IMR-90 (cell line): ENCODE measurements at regions of chr2 and their contacts with region 1.

Region 1: DNA sequence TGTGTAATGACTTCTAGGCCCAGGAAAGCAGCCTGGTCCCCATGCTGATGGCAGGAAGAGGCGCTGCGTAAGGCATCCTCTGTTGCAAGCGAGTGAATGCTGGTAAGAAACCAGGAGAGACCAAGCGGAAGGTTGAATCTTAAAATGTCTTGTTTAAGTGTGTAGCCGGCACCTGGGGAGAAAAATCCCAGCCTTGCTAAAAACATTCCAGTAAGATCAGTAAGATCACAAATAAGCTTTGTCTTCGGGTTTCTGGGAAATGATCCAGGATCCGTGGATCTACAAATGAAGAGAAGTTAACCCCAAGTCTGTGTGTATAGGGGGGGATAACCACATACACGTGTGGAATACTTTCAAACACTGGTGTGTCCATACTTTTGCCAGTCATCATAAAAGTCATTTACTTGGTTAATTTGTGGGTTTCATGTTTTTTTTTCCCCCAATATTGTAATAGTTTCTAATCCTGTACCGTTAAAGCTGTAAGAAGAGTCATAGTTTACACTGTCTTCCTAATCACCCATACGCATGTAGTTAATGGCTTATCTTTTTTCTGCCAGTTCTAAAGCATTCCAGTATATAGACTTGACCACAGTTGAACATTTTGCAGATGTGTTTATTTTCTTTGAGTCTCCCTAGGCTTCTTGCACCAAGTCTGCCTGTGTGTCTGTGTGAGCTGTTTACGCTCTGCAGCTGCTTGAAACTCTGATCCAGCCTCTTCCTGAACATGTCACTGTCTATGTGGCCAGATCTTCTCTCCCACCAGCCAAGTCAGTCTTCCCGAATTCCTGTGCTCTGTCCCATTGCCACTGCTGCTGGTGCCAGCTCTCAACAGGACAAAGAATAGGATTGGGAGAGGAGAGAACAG is 135.9 kb upstream of the ARL4C start:
- DNase-seq: peak; percentile 100
- ATAC-seq: peak; percentile 91
- H3K4me3 ChIP-seq: no peak overlapping the region
- H3K27ac ChIP-seq: peak overlapping the region; percentile 97
- H3K4me1 ChIP-seq: peaks cover 33% of the 10 kb centered on the region
- H3K27me3 ChIP-seq: no peaks in the 10 kb centered on the region
- CTCF ChIP-seq: no peak
- POLR2A ChIP-seq: peak; percentile 48; the same call in 1 of the 2 replicates
- RAD21 ChIP-seq: no peak; the same call in 1 of the 2 replicates

Region 2: DNA sequence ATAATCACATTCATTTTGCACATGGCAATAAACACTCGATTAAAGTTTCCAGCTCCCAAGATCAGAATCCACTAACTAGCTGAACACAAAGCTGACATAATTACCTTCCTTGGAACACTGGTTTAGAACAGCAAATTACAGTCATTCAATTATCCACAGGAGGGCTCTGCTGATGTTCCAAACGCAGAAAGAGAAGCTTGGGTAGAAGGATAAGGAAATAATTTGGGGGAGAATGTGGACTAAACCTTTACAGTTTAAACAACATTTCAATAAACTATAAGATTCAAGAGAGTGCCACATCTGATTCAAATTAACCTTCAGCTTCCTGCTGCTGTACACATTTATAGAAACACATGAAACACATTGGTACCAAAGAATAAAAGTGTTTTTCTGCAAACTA is 68.1 kb before region 1 on chr2:
- CTCF ChIA-PET with region 1: interaction called, 7 read pairs
- POLR2A ChIA-PET with region 1: no interaction called
- dilution Hi-C with region 1: no loop called
- in situ Hi-C with region 1: loop called (anchors 5 kb)
- intact Hi-C with region 1: loop called (anchors 2 kb)
- DNase-seq: peak; percentile 80
- ATAC-seq: peak; percentile 87
- H3K4me3 ChIP-seq: no peak overlapping the region
- H3K27ac ChIP-seq: no peak overlapping the region; the same call in 1 of the 2 replicates
- H3K4me1 ChIP-seq: peaks cover 8% of the 10 kb centered on the region
- H3K27me3 ChIP-seq: no peaks in the 10 kb centered on the region; the same call in 1 of the 2 replicates
- CTCF ChIP-seq: peak; percentile 56
- POLR2A ChIP-seq: no peak
- RAD21 ChIP-seq: peak; percentile 71

Region 3: GRCh38 chr2:234823877-234824376 is 191.2 kb after region 1 on chr2:
- CTCF ChIA-PET with region 1: no interaction called
- POLR2A ChIA-PET with region 1: interaction called, 5 read pairs
- dilution Hi-C with region 1: no loop called
- in situ Hi-C with region 1: no loop called
- intact Hi-C with region 1: loop called (anchors 1 kb)
- DNase-seq: peak; percentile 98
- ATAC-seq: peak; percentile 92
- H3K4me3 ChIP-seq: no peak overlapping the region
- H3K27ac ChIP-seq: peak overlapping the region; percentile 95
- H3K4me1 ChIP-seq: peaks cover 14% of the 10 kb centered on the region
- H3K27me3 ChIP-seq: no peaks in the 10 kb centered on the region
- CTCF ChIP-seq: no peak
- POLR2A ChIP-seq: no peak
- RAD21 ChIP-seq: no peak; the same call in 1 of the 2 replicates

Region 4: DNA sequence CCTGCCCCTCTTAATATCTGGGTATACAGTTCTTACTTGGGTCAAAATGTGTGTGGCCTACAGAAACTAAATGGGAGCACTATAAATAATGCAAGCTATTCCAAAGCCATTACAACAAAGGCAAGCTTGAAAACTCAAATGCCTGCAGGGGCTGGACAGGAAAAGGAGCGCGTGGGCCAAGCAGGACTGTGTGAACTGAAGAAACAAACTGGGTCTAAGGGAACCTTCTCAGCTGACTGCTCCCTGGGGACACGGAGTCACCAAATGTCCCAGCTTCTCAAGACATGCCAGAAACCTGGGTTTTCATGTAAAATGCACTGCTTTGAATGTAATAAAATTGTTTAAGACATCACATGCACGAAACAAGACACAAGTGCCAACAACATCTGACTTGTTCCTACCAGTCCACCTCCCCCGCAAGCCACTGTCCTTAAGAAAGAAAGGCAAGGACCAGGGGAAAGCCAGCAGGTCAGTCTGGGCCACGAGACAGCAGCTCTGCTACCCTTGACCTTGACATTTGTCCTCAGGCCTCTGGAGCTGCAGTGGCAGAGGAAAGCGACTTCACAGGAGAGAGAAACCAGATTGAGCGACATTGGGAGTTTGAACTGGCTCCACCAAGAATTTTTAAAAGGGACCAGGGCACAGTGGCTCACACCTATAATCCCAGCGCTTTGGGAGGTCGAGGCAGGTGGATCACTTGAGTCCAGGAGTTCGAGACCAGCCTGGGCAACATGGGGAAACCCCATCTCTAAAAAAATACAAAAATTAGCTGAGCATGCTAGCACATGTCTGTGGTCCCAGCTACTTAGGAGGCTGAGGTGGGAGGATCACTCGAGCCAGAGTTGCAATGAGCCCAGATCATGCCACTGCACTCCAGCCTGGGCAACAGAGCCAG is 229.3 kb after region 1 on chr2:
- CTCF ChIA-PET with region 1: no interaction called
- POLR2A ChIA-PET with region 1: no interaction called
- dilution Hi-C with region 1: no loop called
- in situ Hi-C with region 1: no loop called
- intact Hi-C with region 1: no loop called
- DNase-seq: no peak
- ATAC-seq: no peak; the same call in 1 of the 2 replicates
- H3K4me3 ChIP-seq: no peak overlapping the region
- H3K27ac ChIP-seq: no peak overlapping the region
- H3K4me1 ChIP-seq: peaks cover 14% of the 10 kb centered on the region
- H3K27me3 ChIP-seq: no peaks in the 10 kb centered on the region
- CTCF ChIP-seq: no peak
- POLR2A ChIP-seq: no peak
- RAD21 ChIP-seq: no peak

Region 5: DNA sequence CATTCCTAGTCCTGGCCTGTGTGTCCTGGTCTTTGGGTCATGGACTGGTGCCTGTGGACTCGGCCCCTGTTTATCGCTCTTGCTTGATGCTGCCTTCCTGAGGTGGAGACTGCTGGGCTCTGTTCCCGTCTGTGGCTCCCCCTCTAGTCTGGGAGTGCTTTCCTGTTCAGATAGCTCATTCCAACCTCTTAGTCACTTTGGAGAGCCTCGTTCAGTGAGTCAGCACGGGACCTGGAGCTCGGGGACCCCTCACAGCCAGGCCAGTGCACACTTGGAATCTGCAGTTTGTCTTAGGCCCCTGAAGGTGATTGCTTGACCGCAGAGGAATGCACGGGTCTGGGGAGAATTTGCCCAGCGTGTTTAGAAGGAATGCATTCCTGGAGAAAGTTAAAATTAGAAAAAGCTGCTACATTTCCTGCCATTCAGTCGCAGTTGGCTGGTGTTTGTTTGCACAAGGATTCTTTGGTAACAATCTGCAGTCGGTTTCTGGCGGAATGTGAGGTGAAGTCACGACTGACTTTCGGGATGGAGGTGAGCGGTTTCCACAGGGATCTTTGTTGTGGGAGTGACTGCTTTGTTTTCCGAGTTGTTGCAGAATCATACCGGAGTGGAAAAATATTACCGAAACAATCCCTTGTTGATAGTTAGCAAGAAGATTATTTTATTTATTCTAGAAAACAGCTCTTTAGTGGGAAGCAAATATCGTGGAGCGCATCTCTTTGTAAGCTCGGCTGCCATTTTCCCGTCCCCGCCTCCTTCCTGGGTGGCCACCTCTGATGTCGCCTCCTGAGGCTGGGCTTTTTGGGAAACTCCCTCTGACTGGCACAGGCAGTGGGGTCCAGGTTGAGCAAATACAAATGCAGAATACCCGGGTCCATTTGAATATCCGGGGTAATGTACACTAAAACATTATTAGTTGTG is 348.7 kb after region 1 on chr2:
- CTCF ChIA-PET with region 1: no interaction called
- POLR2A ChIA-PET with region 1: no interaction called
- dilution Hi-C with region 1: no loop called
- in situ Hi-C with region 1: no loop called
- intact Hi-C with region 1: loop called (anchors 1 kb)
- DNase-seq: peak; percentile 100
- ATAC-seq: peak; percentile 82
- H3K4me3 ChIP-seq: no peak overlapping the region
- H3K27ac ChIP-seq: peak overlapping the region; percentile 86
- H3K4me1 ChIP-seq: peaks cover 54% of the 10 kb centered on the region
- H3K27me3 ChIP-seq: no peaks in the 10 kb centered on the region
- CTCF ChIP-seq: peak; percentile 44
- POLR2A ChIP-seq: peak; percentile 71
- RAD21 ChIP-seq: peak; percentile 46

Region 6: GRCh38 chr2:235506291-235507011 is 873.7 kb after region 1 on chr2:
- CTCF ChIA-PET with region 1: no interaction called
- POLR2A ChIA-PET with region 1: interaction called, 13 read pairs
- dilution Hi-C with region 1: no loop called
- in situ Hi-C with region 1: no loop called
- intact Hi-C with region 1: no loop called
- DNase-seq: no peak
- ATAC-seq: no peak
- H3K4me3 ChIP-seq: no peak overlapping the region
- H3K27ac ChIP-seq: no peak overlapping the region
- H3K4me1 ChIP-seq: peaks cover 19% of the 10 kb centered on the region
- H3K27me3 ChIP-seq: no peaks in the 10 kb centered on the region
- CTCF ChIP-seq: no peak
- POLR2A ChIP-seq: no peak
- RAD21 ChIP-seq: no peak